ENCODE measurements at regions of chrX and their contacts with region 1.

Region 1: GRCh38 chrX:74147439-74147838 is 156.5 kb upstream of the ZCCHC13 start:
- DNase-seq: no peak
- ATAC-seq: no peak
- H3K4me3 ChIP-seq: no peak overlapping the region
- H3K27ac ChIP-seq: no peak overlapping the region
- H3K4me1 ChIP-seq: no peaks in the 10 kb centered on the region
- H3K27me3 ChIP-seq: no peaks in the 10 kb centered on the region
- CTCF ChIP-seq: no peak
- EP300 ChIP-seq: no peak
- POLR2A ChIP-seq: no peak
- RAD21 ChIP-seq: no peak

Region 2: DNA sequence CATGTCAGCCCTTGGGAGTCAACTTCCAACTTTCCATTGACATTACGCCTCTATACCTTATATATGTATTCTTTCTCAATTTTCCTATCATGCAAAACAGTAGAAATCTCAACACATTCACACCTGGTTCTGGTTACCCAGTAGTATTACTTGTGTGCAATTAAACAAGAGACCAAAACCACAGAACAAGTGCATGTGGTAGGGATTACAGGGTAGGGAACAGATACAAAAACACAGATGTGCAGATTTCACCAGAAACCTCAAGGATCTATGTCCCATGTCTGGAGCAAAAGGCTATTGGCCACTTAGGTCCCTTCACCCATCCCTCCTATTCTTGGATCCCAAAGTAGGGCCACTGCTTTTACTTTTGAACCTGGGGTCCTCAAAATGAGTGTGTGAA is 12.9 kb after region 1 on chrX:
- CTCF ChIA-PET with region 1: no interaction called
- POLR2A ChIA-PET with region 1: no interaction called
- in situ Hi-C with region 1: no loop called
- intact Hi-C with region 1: no loop called
- DNase-seq: no peak
- ATAC-seq: no peak
- H3K4me3 ChIP-seq: no peak overlapping the region
- H3K27ac ChIP-seq: no peak overlapping the region
- H3K4me1 ChIP-seq: no peaks in the 10 kb centered on the region
- H3K27me3 ChIP-seq: no peaks in the 10 kb centered on the region
- CTCF ChIP-seq: no peak
- EP300 ChIP-seq: no peak
- POLR2A ChIP-seq: no peak
- RAD21 ChIP-seq: no peak

Region 3: DNA sequence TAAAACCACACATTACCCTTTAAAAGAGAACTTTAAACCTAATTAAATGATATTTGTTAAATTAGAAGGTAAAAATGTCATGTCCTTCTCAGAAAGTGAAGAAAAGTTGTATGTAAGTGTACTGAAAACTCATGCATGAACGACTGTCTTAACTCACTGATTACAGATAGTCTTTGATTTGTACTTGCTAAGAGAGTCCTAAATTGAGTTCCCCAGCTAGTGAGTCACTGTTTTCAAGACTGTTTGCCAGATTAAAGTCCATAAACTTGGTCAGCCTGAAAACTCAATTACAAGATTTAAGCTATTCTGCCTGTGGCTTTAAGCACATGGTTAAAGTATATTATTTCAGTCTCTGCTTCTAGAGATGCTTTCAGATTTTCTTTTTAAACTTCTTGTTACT is 31.6 kb after region 1 on chrX:
- CTCF ChIA-PET with region 1: no interaction called
- POLR2A ChIA-PET with region 1: no interaction called
- in situ Hi-C with region 1: no loop called
- intact Hi-C with region 1: loop called (anchors 2 kb)
- DNase-seq: peak; percentile 39
- ATAC-seq: peak; percentile 56; the same call in 2 of the 3 replicates
- H3K4me3 ChIP-seq: no peak overlapping the region; a peak in 1 of 6 replicates
- H3K27ac ChIP-seq: no peak overlapping the region
- H3K4me1 ChIP-seq: peaks cover 14% of the 10 kb centered on the region
- H3K27me3 ChIP-seq: no peaks in the 10 kb centered on the region
- CTCF ChIP-seq: no peak
- EP300 ChIP-seq: no peak
- POLR2A ChIP-seq: no peak
- RAD21 ChIP-seq: no peak

Region 4: DNA sequence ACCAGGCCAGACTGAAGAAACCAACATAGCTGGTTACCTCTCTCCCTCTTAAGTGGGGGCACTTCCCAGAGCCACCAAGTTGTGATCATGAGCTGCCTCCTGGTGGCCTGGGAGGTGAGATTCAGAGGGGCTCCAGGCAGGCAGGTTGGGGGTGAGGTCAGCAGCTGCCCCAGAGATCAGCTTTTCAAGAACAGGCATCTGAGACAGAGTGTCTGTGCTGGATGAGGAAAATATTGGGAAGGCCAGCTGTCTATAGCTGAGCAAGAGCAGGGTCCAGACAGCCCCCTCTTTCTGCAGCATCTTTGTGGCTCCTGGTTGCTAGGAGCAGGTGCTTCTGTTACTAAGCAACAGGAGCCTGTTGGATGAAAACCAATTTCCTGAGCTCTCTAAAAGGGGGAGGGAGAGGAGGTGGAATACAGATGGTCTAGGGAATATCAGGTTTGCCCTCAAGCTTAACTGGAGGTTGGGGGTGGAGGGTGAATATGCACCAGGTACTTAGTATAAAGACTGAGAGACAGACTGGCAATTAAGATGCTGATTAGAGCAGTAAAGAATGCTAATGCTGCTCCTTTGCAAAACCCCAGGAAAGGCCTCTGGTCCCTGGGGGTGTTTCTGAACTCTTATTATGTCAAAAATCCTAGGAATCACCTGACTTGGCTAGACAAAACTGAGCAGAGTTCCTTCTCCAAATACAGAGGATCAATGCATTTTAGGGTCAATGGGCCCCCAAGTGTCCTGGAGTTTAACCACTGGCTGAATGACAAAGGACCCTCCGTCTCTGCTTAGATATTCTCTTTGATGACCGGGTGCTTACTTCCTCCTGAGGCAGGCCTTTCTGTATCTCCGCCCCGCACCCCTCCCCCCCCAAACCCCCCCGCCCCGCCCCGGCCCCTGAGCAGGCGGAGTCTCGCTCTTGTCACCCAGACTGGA is 178.0 kb after region 1 on chrX:
- CTCF ChIA-PET with region 1: no interaction called
- POLR2A ChIA-PET with region 1: no interaction called
- in situ Hi-C with region 1: no loop called
- intact Hi-C with region 1: no loop called
- DNase-seq: no peak
- ATAC-seq: peak; percentile 80
- H3K4me3 ChIP-seq: no peak overlapping the region
- H3K27ac ChIP-seq: no peak overlapping the region
- H3K4me1 ChIP-seq: no peaks in the 10 kb centered on the region
- H3K27me3 ChIP-seq: no peaks in the 10 kb centered on the region
- CTCF ChIP-seq: peak; percentile 39
- EP300 ChIP-seq: no peak
- POLR2A ChIP-seq: no peak
- RAD21 ChIP-seq: no peak

Region 5: DNA sequence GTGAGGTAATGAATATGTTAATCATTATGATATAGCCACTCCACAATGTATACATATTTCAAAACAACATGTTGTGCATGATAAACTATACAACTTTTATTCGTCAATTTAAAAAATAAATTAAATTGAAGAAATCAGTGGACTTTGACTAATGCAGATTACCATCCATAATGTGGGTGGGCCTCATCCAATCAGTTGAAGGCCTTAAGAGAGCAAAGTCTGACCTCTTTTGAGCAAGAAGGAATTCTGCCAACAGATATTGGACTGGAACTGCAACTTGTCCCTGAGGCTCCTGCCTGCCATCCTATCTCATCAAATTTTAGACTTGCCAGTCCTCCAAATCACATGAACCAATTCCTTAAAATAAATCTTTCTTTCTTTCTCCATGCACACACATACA is 216.5 kb after region 1 on chrX:
- CTCF ChIA-PET with region 1: no interaction called
- POLR2A ChIA-PET with region 1: no interaction called
- in situ Hi-C with region 1: no loop called
- intact Hi-C with region 1: no loop called
- DNase-seq: no peak
- ATAC-seq: no peak
- H3K4me3 ChIP-seq: no peak overlapping the region
- H3K27ac ChIP-seq: no peak overlapping the region
- H3K4me1 ChIP-seq: no peaks in the 10 kb centered on the region
- H3K27me3 ChIP-seq: no peaks in the 10 kb centered on the region
- CTCF ChIP-seq: no peak
- EP300 ChIP-seq: no peak
- POLR2A ChIP-seq: no peak
- RAD21 ChIP-seq: no peak

Measured in HepG2 (cell line).